ENCODE measurements at regions of chr7 and their contacts with region 1.

Region 1: DNA sequence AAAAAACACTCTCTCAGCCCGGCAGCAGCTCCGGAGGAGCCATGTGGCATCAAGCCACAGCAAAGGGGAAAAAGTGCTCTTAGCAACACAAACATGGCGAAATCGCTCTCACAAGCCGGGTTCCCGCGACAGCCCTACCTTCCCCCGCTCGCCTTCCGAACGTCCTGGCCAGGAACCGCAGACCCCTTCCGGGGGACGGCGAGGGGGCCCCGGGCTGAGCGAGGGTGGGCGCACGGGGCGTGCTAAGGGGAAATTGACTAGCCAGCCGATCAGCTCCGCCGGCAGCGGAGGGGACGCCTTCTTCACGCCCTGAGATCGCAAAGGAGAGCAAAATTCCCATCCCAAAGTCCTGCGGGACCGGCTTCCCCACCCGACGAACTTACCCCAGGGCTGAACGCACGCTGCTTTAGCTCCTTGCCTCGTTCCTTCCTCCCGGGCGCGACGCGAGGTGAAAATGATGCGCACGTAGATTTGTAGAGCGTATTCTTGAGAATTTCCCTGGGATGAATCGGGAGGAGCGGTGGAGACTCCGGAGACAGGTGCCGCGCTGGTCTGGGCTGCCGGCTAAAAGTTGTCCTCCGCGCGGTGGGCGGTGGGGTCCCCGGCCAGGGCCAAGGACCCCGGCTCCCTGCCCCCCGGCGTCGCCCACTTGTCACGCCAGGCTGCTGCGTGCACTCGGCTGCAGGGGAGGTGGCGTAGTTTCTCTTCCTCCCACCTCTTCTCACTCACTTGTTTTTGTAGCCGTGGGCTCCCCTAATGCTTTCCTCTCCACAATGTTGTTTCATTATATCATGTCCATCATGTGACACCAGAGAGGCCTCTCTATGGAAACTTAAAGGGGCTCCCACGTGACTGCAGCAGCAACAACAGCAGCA is 220.1 kb upstream of the MKLN1 start:
- DNase-seq: peak; percentile 83
- ATAC-seq: peak; percentile 29
- H3K4me3 ChIP-seq: peak overlapping the region; percentile 85 to 91 (median 89)
- H3K27ac ChIP-seq: peak overlapping the region; percentile 79
- H3K4me1 ChIP-seq: peaks cover 57% of the 10 kb centered on the region
- H3K27me3 ChIP-seq: no peaks in the 10 kb centered on the region; a peak in 1 of 5 replicates
- CTCF ChIP-seq: peak; percentile 17
- EP300 ChIP-seq: no peak
- POLR2A ChIP-seq: peak; percentile 59 to 63
- RAD21 ChIP-seq: no peak

Region 2: GRCh38 chr7:130921391-130922180 is 186.0 kb before region 1 on chr7:
- CTCF ChIA-PET with region 1: no interaction called
- POLR2A ChIA-PET with region 1: no interaction called
- in situ Hi-C with region 1: no loop called
- intact Hi-C with region 1: no loop called
- DNase-seq: no peak
- ATAC-seq: no peak
- H3K4me3 ChIP-seq: peak overlapping the region in 1 of 3 experiments; percentile 21; a peak in 1 of 6 replicates
- H3K27ac ChIP-seq: peak overlapping the region; percentile 78
- H3K4me1 ChIP-seq: peaks cover 95% of the 10 kb centered on the region
- H3K27me3 ChIP-seq: no peaks in the 10 kb centered on the region
- CTCF ChIP-seq: no peak
- EP300 ChIP-seq: no peak
- POLR2A ChIP-seq: no peak
- RAD21 ChIP-seq: no peak

Region 3: GRCh38 chr7:131057015-131057793 is 50.4 kb before region 1 on chr7:
- CTCF ChIA-PET with region 1: no interaction called
- POLR2A ChIA-PET with region 1: interaction called, 12 read pairs
- in situ Hi-C with region 1: no loop called
- intact Hi-C with region 1: no loop called
- DNase-seq: peak; percentile 89
- ATAC-seq: peak; percentile 77
- H3K4me3 ChIP-seq: no peak overlapping the region; a peak in 1 of 6 replicates
- H3K27ac ChIP-seq: peak overlapping the region; percentile 77
- H3K4me1 ChIP-seq: peaks cover 66% of the 10 kb centered on the region
- H3K27me3 ChIP-seq: no peaks in the 10 kb centered on the region
- CTCF ChIP-seq: no peak
- EP300 ChIP-seq: peak in 1 of 2 experiments; percentile 98; a peak in 2 of 4 replicates
- POLR2A ChIP-seq: 0 out of 4 replicates have a peak, but pooled peaks of 1 of the 2 experiments have one; percentile 24
- RAD21 ChIP-seq: no peak

Region 4: GRCh38 chr7:131068604-131069021 is 39.0 kb before region 1 on chr7:
- CTCF ChIA-PET with region 1: no interaction called
- POLR2A ChIA-PET with region 1: interaction called, 13 read pairs
- in situ Hi-C with region 1: no loop called
- intact Hi-C with region 1: loop called (anchors 2 kb)
- DNase-seq: no peak
- ATAC-seq: no peak
- H3K4me3 ChIP-seq: no peak overlapping the region
- H3K27ac ChIP-seq: peak overlapping the region; percentile 3
- H3K4me1 ChIP-seq: peaks cover 76% of the 10 kb centered on the region
- H3K27me3 ChIP-seq: no peaks in the 10 kb centered on the region
- CTCF ChIP-seq: peak; percentile 37
- EP300 ChIP-seq: no peak
- POLR2A ChIP-seq: no peak
- RAD21 ChIP-seq: no peak

Region 5: DNA sequence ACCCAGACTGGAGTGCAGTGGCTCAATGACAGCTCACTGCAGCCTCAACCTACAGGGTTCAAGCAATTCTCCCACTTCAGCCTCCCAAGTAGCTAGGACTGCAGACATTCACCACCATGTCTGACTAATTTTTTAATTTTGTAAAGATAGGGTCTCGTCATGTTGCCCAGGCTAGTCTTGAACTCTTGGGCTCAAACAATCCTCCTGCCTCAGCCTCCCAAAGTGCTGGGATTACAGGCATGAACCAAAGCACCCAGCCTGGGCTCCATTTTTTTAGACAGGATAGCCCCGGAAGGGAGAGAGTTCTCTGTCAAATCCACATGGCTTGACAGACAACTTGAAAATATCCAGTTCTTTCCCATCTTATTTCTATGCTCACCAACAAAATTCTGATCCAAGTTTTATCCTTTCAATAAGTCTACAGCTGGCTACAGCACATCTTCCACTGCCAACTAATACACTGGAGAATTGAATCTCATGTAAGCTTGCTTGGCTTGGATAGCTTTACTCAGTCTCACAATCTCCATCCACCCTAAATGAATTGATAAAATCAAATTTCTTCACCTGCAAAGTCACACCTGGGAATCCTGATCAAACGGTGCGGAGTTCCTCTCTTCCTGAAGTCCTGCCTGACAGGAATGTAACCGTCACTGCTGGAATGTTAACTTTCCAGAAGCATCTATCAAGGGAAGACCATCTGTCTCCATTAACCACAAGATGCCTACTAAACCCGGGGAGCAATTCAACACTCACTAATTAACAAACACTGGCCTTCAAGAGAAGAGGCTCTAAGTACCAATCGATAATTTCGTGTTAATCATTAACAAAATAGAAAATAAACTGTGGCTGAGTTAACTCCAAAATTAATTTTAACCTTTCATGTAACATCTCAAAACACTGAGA is 19.6 kb before region 1 on chr7:
- CTCF ChIA-PET with region 1: no interaction called
- POLR2A ChIA-PET with region 1: interaction called, 16 read pairs
- in situ Hi-C with region 1: no loop called
- intact Hi-C with region 1: no loop called
- DNase-seq: peak; percentile 61
- ATAC-seq: peak; percentile 53
- H3K4me3 ChIP-seq: peak overlapping the region; percentile 6 to 34 (median 14); a peak in 4 of 6 replicates
- H3K27ac ChIP-seq: peak overlapping the region; percentile 61
- H3K4me1 ChIP-seq: peaks cover 76% of the 10 kb centered on the region
- H3K27me3 ChIP-seq: no peaks in the 10 kb centered on the region
- CTCF ChIP-seq: no peak
- EP300 ChIP-seq: peak in 1 of 2 experiments; percentile 68; a peak in 2 of 4 replicates
- POLR2A ChIP-seq: peak in 1 of 2 experiments; percentile 30; a peak in 1 of 4 replicates
- RAD21 ChIP-seq: 0 out of 2 replicates have a peak, but pooled peaks have one; percentile 14

Region 6: DNA sequence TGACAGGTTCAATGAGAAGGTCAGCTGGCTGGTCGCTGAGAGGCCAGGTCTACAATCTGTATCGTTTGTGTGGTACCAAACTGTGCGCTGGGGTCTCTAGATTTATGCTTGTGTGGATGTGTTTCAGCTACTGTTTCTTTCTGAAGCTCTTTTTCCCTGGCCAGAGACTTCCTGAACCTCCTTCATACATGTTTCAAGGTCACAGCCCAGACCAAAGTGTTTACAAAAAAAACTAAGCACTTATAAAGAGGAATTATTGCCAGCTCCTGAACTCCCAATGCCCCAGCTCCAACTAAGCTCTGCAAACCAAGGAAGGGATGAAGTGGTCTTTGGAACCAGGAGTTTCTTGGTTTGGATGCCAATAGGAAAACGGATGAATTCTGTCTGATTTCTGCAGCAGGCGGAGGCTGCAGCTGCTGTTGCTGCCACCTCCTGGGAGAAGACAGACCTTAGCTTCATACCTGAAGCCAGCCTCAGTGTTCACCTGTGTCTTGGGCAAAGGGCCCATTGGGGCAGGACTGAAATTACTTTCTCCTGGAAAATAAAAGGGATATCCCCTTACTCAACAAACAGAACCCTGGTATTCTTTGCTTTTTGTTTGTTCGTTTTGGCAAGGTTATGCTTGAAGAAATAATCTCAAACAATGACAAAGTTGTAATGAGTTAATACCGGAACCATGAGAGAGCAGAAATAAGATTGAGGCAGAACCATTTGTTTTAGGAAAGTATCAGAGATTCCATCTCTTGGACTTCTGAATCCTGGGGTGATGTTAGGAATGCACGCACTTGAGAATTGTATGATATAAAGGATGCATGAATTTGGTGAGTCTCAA is 195.5 kb after region 1 on chr7:
- CTCF ChIA-PET with region 1: no interaction called
- POLR2A ChIA-PET with region 1: no interaction called
- in situ Hi-C with region 1: no loop called
- intact Hi-C with region 1: loop called (anchors 2 kb)
- DNase-seq: peak; percentile 16
- ATAC-seq: peak; percentile 66
- H3K4me3 ChIP-seq: no peak overlapping the region
- H3K27ac ChIP-seq: no peak overlapping the region
- H3K4me1 ChIP-seq: peaks cover 64% of the 10 kb centered on the region
- H3K27me3 ChIP-seq: no peaks in the 10 kb centered on the region
- CTCF ChIP-seq: peak; percentile 73
- EP300 ChIP-seq: no peak
- POLR2A ChIP-seq: no peak
- RAD21 ChIP-seq: peak; percentile 51

Region 7: DNA sequence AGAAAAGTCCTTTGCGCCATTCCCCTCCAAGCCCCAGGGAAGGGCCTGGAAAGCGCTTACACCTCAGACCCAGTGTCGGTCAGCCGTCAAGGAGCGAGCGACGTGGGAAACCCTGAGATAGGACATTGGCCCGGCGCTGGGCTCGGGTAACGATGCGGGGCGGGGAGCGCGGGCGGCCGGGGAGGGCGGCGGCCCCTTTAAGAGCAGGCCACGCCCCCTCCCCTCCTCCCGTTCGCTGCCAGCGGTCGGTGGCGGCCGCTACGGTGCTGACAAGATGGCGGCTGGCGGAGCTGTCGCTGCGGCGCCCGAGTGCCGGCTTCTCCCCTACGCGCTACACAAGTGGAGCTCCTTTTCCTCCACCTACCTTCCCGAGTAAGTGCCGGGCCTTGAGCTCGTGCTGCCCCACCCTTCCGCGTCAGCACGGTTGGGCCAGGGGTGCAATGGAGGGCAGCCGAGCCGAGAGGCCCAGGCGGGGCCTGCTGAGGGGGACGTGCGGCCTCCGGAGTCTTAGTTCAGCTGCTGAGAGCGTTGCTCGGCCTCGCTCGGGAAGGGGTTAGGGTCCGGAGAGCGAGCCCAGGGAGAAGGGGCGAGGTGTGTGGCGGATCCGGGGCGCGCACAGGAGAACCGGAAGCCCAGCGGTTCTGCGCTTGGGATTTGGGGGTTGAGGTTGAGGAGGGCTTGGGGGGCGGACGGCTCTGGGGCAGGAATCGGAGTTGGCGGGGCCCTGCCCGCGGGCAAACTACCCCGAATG is 220.2 kb after region 1 on chr7 and contains the start of gene MKLN1:
- CTCF ChIA-PET with region 1: no interaction called
- POLR2A ChIA-PET with region 1: interaction called, 4 read pairs
- in situ Hi-C with region 1: no loop called
- intact Hi-C with region 1: loop called (anchors 2 kb)
- DNase-seq: peak; percentile 68
- ATAC-seq: peak; percentile 95
- H3K4me3 ChIP-seq: peak within 1 kb of the TSS; percentile 92 to 100 (median 99)
- H3K27ac ChIP-seq: peak within 1 kb of the TSS; percentile 98
- H3K4me1 ChIP-seq: peaks cover 62% of the 10 kb centered on the region
- H3K27me3 ChIP-seq: no peaks in the 10 kb centered on the region; a peak in 1 of 5 replicates
- CTCF ChIP-seq: no peak
- EP300 ChIP-seq: no peak
- POLR2A ChIP-seq: peak; percentile 81 to 91
- RAD21 ChIP-seq: peak; percentile 51
- total RNA-seq, gene MKLN1: 43.5 and 75.4 TPM in 2 replicates

Region 8: GRCh38 chr7:131424219-131424822 is 316.7 kb after region 1 on chr7:
- CTCF ChIA-PET with region 1: no interaction called
- POLR2A ChIA-PET with region 1: no interaction called
- in situ Hi-C with region 1: no loop called
- intact Hi-C with region 1: loop called (anchors 5 kb)
- DNase-seq: peak; percentile 9
- ATAC-seq: peak; percentile 49; the same call in 1 of the 3 replicates
- H3K4me3 ChIP-seq: no peak overlapping the region
- H3K27ac ChIP-seq: no peak overlapping the region
- H3K4me1 ChIP-seq: peaks cover 6% of the 10 kb centered on the region; the same call in 1 of the 2 replicates
- H3K27me3 ChIP-seq: no peaks in the 10 kb centered on the region
- CTCF ChIP-seq: peak; percentile 47
- EP300 ChIP-seq: no peak
- POLR2A ChIP-seq: no peak
- RAD21 ChIP-seq: no peak

Measured in HepG2 (cell line).